Activated CD8-positive, alpha-beta T cell treated with anti-CD3 and anti-CD28 coated beads, Interleukin-2, amount 10 ng/mL, durations not matched to agents 7 days and 5 days (primary cell): ENCODE measurements at regions of chr15 and their contacts with region 1.

Region 1: DNA sequence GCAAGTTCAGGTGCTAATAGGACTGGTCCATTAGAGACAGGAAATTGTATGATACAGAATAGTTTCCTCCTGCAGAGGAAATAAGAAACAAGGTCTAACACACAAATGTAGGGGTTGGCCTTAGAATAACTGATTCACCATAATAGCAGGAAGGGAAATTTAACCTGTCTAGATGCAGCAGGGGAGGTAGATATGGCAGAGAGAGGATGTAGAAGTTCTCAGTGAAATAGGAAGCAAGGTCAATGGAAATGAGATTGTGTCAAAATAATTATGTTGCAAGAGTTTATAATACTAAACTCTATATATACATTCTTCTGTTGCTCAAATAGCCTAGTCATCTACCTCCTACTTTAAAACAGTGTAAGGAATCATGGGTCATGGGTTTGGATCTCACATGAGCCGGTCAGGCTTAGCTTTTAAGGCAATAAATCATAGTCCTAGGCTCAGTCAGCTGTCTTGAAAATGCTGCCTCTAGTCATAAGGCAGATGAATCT is 17.0 kb downstream of the BCL2A1 start:
- DNase-seq: no peak
- ATAC-seq: peak; percentile 49
- H3K4me3 Mint-ChIP-seq: no peak overlapping the region
- H3K27ac Mint-ChIP-seq: peak overlapping the region; percentile 23
- H3K4me1 Mint-ChIP-seq: peaks cover 25% of the 10 kb centered on the region
- H3K27me3 Mint-ChIP-seq: no peaks in the 10 kb centered on the region

Region 2: DNA sequence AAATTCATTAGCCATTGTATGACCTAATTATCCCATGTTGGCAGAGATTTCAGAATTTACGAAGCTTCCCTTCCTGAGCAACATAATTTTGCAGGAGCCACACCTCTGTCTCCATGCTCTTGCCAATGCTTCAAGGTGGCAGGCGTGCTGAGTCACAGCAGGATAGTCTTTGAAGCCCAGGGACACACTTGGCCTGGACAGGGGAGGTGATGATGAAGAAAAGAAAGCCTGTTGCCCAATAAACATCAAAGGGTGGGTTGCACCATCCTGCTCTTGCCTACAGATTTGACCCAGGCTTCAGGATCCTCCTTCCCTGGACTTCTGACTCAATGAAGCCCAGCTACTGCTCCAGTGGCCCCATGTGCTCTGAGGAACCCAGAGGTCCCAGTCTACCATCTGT is 404.8 kb before region 1 on chr15:
- CTCF ChIA-PET with region 1: no interaction called
- POLR2A ChIA-PET with region 1: no interaction called
- DNase-seq: no peak
- ATAC-seq: no peak
- H3K4me3 Mint-ChIP-seq: no peak overlapping the region
- H3K27ac Mint-ChIP-seq: no peak overlapping the region
- H3K4me1 Mint-ChIP-seq: no peaks in the 10 kb centered on the region
- H3K27me3 Mint-ChIP-seq: peaks cover 7% of the 10 kb centered on the region

Region 3: DNA sequence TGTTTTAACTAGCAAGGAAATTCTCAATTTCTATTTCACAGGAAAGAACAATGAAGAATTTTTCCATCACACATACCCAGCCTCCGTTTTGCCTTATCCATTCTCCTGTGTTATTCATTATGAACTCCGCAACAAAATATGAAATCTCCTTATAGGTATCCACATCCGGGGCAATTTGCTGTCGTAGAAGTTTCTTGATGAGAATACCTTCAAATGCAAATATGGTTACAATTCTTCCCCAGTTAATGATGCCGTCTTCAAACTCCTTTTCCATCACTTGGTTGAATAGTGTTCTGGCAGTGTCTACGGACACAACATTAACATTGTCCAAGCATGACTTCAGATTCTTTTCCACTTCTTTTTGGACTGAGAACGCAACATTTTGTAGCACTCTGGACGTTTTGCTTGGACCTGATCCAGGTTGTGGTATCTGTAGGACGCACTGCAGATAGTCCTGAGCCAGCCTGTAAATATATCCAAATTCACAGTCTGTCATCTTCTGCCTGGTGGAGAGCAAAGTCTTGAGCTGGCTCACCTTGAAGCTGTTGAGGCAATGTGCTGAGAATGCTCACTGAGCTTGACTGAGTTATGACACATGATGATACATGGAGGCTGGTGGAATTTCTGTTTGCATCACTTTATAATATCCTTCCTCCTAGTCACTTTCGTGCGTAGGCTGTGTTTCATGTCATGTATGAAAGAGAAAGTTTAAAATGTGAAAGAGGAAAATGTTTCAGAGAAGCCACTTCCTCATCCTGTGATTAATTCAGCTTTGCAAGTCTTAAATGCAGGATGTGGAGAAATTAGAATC is 16.8 kb after region 1 on chr15 and contains the start of gene BCL2A1:
- CTCF ChIA-PET with region 1: interaction called, 4 read pairs
- POLR2A ChIA-PET with region 1: interaction called, 14 read pairs
- DNase-seq: peak; percentile 73
- ATAC-seq: peak; percentile 69
- H3K4me3 Mint-ChIP-seq: peak within 1 kb of the TSS; percentile 91
- H3K27ac Mint-ChIP-seq: peak within 1 kb of the TSS; percentile 94
- H3K4me1 Mint-ChIP-seq: peaks cover 56% of the 10 kb centered on the region
- H3K27me3 Mint-ChIP-seq: no peaks in the 10 kb centered on the region
- total RNA-seq, gene BCL2A1: 23.1 to 26.3 TPM